OCI-LY7 (cell line): ENCODE measurements at regions of chr21 and their contacts with region 1.

Region 1: GRCh38 chr21:30044445-30045064 is 104.8 kb upstream of the GRIK1 start:
- DNase-seq: peak; percentile 25
- H3K4me3 ChIP-seq: no peak overlapping the region
- H3K27ac ChIP-seq: no peak overlapping the region
- H3K4me1 ChIP-seq: no peaks in the 10 kb centered on the region
- CTCF ChIP-seq: peak; percentile 97

Region 2: DNA sequence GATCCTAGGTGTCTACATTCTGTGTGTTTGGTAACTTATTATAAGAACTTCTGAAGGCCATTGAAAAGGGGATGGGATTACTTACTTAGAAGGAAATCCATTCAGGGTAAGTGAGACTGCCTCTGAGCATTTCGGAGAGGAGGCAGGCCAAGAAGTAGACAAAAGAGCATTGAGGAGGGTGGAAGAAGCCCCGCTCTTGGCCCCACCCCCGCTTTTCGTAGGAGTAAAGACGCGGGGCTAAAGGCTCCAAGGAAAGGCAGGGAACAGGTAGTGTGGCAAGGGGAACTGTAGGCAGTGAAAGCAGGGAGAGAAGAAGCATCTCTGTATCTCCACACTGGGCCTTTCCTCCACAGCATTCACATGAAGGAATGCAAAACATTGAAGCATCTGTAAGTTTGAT is 52.9 kb before region 1 on chr21:
- CTCF ChIA-PET with region 1: no interaction called
- POLR2A ChIA-PET with region 1: no interaction called
- intact Hi-C with region 1: no loop called
- DNase-seq: no peak
- H3K4me3 ChIP-seq: no peak overlapping the region
- H3K27ac ChIP-seq: no peak overlapping the region
- H3K4me1 ChIP-seq: no peaks in the 10 kb centered on the region
- CTCF ChIP-seq: no peak

Region 3: DNA sequence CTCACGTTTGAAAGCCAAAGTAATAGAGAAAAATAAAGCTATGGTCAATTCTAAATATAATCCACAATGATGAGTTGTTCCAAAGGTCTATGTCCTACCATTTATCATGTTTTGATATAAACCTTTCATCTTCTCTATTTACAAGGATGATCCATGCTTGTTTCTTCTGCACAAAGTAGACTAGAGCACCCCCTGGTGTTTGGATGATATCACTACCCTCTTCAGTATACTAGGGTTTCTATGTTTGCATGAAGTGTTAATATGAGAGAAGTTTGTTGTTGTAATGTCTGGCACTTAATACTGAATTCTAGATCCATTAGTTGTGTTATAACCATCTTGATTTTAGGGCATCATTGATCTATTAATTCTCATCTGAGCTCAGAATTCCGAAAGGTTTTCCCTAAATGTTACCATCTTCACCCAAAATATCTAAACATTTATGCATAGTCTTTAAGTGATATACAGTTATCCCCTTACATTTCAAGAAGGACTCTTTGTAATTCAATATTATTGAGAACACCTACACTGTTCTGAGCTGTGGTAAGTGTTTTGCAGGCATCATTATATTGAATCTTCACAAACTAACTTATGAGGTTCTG is 150.2 kb after region 1 on chr21:
- CTCF ChIA-PET with region 1: no interaction called
- POLR2A ChIA-PET with region 1: no interaction called
- intact Hi-C with region 1: loop called (anchors 10 kb)
- DNase-seq: peak; percentile 38
- H3K4me3 ChIP-seq: no peak overlapping the region
- H3K27ac ChIP-seq: no peak overlapping the region
- H3K4me1 ChIP-seq: no peaks in the 10 kb centered on the region
- CTCF ChIP-seq: peak; percentile 83